ENCODE measurements at regions of chr6 and their contacts with region 1.

Region 1: GRCh38 chr6:5764401-5764955 is 242.2 kb downstream of the NRN1 start:
- DNase-seq: no peak
- H3K4me3 ChIP-seq: no peak overlapping the region
- H3K27ac ChIP-seq: no peak overlapping the region
- H3K4me1 ChIP-seq: peaks cover 0 to 1% (median 0%) of the 10 kb centered on the region in 4 experiments; a peak in 1 of 7 replicates
- H3K27me3 ChIP-seq: no peaks in the 10 kb centered on the region
- CTCF ChIP-seq: no peak
- EP300 ChIP-seq: no peak
- POLR2A ChIP-seq: no peak
- RAD21 ChIP-seq: no peak

Region 2: GRCh38 chr6:5746053-5746758 is 18.3 kb before region 1 on chr6:
- CTCF ChIA-PET with region 1: interaction called, 12 read pairs
- POLR2A ChIA-PET with region 1: no interaction called
- DNase-seq: peak; percentile 21 to 63
- H3K4me3 ChIP-seq: no peak overlapping the region
- H3K27ac ChIP-seq: no peak overlapping the region
- H3K4me1 ChIP-seq: peaks cover 0 to 2% (median under 1%) of the 10 kb centered on the region in 4 experiments; a peak in 2 of 7 replicates
- H3K27me3 ChIP-seq: no peaks in the 10 kb centered on the region
- CTCF ChIP-seq: peak; percentile 66 to 75 (median 69)
- EP300 ChIP-seq: no peak
- POLR2A ChIP-seq: no peak
- RAD21 ChIP-seq: peak; percentile 76 to 82

Region 3: DNA sequence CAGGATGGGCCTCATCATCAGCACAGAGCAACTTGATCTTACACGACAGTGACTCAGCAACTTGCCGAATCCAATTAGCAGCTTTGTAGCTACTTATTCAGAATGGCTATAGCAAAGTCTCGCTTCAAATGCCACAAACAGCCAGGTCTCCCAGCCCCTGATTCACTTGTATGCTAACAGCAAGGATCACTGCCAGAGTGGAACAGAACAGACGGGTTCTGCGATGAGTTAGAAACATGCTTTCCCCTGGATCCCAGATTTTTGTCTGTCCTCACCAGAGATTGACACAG is 12.1 kb before region 1 on chr6:
- CTCF ChIA-PET with region 1: interaction called, 12 read pairs
- POLR2A ChIA-PET with region 1: no interaction called
- DNase-seq: peak in 1 of 2 experiments; percentile 19
- H3K4me3 ChIP-seq: no peak overlapping the region
- H3K27ac ChIP-seq: no peak overlapping the region
- H3K4me1 ChIP-seq: peaks cover 0 to 6% (median 3%) of the 10 kb centered on the region in 4 experiments; a peak in 4 of 7 replicates
- H3K27me3 ChIP-seq: no peaks in the 10 kb centered on the region
- CTCF ChIP-seq: no peak
- EP300 ChIP-seq: no peak
- POLR2A ChIP-seq: no peak
- RAD21 ChIP-seq: no peak; a peak in 1 of 4 replicates

Measured in H1 (cell line).